RWPE1 (cell line): ENCODE measurements at regions of chr10 and their contacts with region 1.

Region 1: GRCh38 chr10:102583435-102584417 is 60.6 kb upstream of the TRIM8 start:
- DNase-seq: peak; percentile 91
- H3K27ac ChIP-seq: no peak overlapping the region
- CTCF ChIP-seq: peak; percentile 87

Region 2: DNA sequence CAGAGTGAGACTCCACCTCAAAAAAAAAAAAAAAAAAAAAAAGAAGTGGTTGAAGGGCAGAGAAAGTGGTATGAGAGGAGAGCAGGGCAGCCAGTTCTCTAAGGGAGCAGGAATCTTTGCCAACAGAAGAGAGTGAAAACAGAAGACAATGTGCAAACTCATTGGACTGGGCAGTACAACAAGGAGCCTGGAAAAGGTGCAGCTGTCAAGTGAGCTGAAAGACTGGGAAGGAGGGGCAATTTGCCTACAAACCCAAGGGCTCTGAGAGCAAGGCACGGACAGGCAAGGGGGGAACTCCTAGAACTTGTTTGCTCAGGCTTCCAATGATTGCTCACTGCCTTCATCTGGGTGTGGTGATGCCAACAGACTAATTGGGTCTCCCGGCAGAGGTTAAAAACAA is 90.7 kb before region 1 on chr10:
- CTCF ChIA-PET with region 1: interaction called, 14 read pairs
- POLR2A ChIA-PET with region 1: no interaction called
- DNase-seq: peak; percentile 27
- H3K27ac ChIP-seq: peak overlapping the region; percentile 52
- CTCF ChIP-seq: no peak

Region 3: GRCh38 chr10:102503281-102504220 is 80.2 kb before region 1 on chr10 and contains the start of gene SUFU:
- CTCF ChIA-PET with region 1: interaction called, 19 read pairs
- POLR2A ChIA-PET with region 1: interaction called, 4 read pairs
- DNase-seq: peak; percentile 100
- H3K27ac ChIP-seq: peak within 1 kb of the TSS; percentile 85
- CTCF ChIP-seq: peak; percentile 91

Region 4: DNA sequence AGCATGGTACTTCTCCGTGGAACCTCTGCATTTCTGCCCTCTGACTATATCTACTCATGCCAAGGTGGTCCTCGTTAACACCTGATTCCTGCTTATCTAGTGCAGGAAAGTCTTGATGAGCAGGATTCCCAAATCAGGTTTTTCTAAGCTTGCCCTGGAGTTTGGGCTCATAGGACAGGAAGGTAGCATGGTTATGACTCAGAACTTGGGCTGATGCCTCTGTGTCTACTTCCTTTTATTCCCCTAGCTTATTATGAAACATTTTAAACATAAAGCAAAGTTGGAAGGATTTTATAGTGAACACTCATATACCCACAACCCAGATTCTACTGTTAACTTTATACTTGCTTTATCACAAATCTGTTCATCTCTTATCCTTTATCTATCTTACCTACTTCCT is 74.3 kb before region 1 on chr10:
- CTCF ChIA-PET with region 1: interaction called, 19 read pairs
- POLR2A ChIA-PET with region 1: no interaction called
- DNase-seq: peak; percentile 44
- H3K27ac ChIP-seq: 0 out of 2 replicates have a peak overlapping the region, but pooled peaks have one; percentile 37
- CTCF ChIP-seq: no peak

Region 5: DNA sequence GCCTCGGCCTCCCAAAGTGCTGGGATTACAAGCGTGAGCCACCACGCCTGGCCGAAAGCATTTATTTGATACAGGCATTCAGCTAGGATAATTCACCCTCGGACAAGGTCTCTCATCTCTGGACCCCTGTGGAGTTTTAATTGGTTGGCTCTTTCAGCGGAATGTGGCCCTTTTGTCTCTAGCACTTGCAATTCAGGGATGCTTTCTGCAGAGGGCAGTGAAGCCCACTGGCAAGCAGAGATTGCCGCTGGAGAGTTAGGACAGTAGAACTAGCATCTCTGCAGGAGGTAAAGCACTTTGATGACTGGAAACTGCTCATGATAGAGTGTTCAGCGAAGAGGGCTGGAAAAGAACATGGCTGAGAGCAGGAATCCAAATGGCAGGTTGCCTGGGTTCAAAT is 17.9 kb before region 1 on chr10:
- CTCF ChIA-PET with region 1: interaction called, 11 read pairs
- POLR2A ChIA-PET with region 1: no interaction called
- DNase-seq: no peak
- H3K27ac ChIP-seq: no peak overlapping the region
- CTCF ChIP-seq: no peak

Region 6: GRCh38 chr10:103578782-103579382 is 995.2 kb after region 1 on chr10:
- CTCF ChIA-PET with region 1: no interaction called
- POLR2A ChIA-PET with region 1: no interaction called
- DNase-seq: no peak
- H3K27ac ChIP-seq: no peak overlapping the region
- CTCF ChIP-seq: no peak